Common myeloid progenitor, CD34-positive (primary cell): ENCODE measurements at regions of chr7 and their contacts with region 1.

Region 1: DNA sequence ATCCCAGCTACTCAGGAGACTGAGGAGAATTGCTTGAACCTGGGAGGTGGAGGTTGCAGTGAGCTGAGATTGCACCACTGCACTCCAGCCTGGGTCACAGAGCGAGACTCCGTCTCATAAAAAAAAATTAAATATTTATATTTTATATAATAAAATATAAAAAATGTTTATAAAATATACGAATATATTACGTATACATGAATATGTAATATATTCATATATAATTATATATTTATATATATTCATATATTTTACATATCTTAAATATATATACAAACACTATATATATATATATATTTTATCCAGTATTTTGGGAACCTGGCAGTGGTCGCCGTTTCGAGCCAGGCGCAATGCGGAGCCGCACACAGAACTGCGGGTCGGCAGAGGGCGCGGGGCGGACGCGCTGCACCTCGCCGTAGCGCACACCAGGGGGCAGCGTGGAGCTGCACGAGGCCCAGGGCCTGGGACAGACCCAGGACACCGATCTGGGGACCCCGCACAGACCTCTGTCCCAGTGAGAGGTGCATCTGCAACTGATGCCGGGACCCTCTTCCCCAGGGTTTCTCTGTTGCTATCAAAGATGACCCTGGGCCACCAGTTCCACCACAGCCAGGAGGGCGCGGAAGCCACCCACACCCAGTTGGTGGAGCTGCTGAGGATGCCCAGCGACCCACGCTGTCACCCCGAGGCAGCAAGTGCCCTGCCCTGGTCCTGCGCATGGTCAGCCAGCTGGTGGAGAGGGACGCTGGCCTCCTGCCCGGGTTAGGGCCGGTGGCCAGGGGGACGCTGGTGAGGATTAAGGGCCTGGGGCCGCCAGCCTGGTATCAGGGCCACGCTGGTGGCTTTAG is 22.7 kb downstream of the AP5Z1 start:
- DNase-seq: peak; percentile 54 to 74 (median 71)
- H3K4me3 ChIP-seq: no peak overlapping the region
- H3K27ac ChIP-seq: no peak overlapping the region
- H3K4me1 ChIP-seq: peaks cover 0 to under 1% (median under 1%) of the 10 kb centered on the region in 4 experiments
- H3K27me3 ChIP-seq: no peaks in the 10 kb centered on the region

Region 2: GRCh38 chr7:4809091-4809591 is 11.1 kb after region 1 on chr7:
- CTCF ChIA-PET with region 1: interaction called, 17 read pairs
- POLR2A ChIA-PET with region 1: no interaction called
- DNase-seq: peak; percentile 85 to 93 (median 87)
- H3K4me3 ChIP-seq: peak overlapping the region in 5 of 7 experiments; percentile 29 to 69 (median 52)
- H3K27ac ChIP-seq: peak overlapping the region in 1 of 2 experiments; percentile 68
- H3K4me1 ChIP-seq: peaks cover 0 to 40% (median 22%) of the 10 kb centered on the region in 4 experiments
- H3K27me3 ChIP-seq: no peaks in the 10 kb centered on the region

Region 3: GRCh38 chr7:4815609-4816418 is 17.7 kb after region 1 on chr7:
- CTCF ChIA-PET with region 1: interaction called, 17 read pairs
- POLR2A ChIA-PET with region 1: interaction called, 3 read pairs
- DNase-seq: no peak
- H3K4me3 ChIP-seq: no peak overlapping the region
- H3K27ac ChIP-seq: no peak overlapping the region
- H3K4me1 ChIP-seq: peaks cover 0 to 23% (median 12%) of the 10 kb centered on the region in 4 experiments
- H3K27me3 ChIP-seq: no peaks in the 10 kb centered on the region

Region 4: GRCh38 chr7:4823441-4824119 is 25.5 kb after region 1 on chr7:
- CTCF ChIA-PET with region 1: interaction called, 29 read pairs
- POLR2A ChIA-PET with region 1: no interaction called
- DNase-seq: peak; percentile 48 to 90 (median 83)
- H3K4me3 ChIP-seq: no peak overlapping the region
- H3K27ac ChIP-seq: no peak overlapping the region
- H3K4me1 ChIP-seq: peaks cover 0 to 10% (median 3%) of the 10 kb centered on the region in 4 experiments
- H3K27me3 ChIP-seq: no peaks in the 10 kb centered on the region

Region 5: GRCh38 chr7:4883374-4884144 is 85.5 kb after region 1 on chr7 and contains the start of gene RADIL:
- CTCF ChIA-PET with region 1: interaction called, 73 read pairs
- POLR2A ChIA-PET with region 1: no interaction called
- DNase-seq: peak; percentile 93 to 95 (median 95)
- H3K4me3 ChIP-seq: peak within 1 kb of the TSS; percentile 18 to 66 (median 48)
- H3K27ac ChIP-seq: no peak within 1 kb of the TSS
- H3K4me1 ChIP-seq: peaks cover 0 to 17% (median 15%) of the 10 kb centered on the region in 4 experiments
- H3K27me3 ChIP-seq: peaks cover 0 to 28% (median 22%) of the 10 kb centered on the region in 5 experiments

Region 6: GRCh38 chr7:4916115-4916514 is 118.0 kb after region 1 on chr7:
- CTCF ChIA-PET with region 1: no interaction called
- POLR2A ChIA-PET with region 1: no interaction called
- DNase-seq: no peak
- H3K4me3 ChIP-seq: no peak overlapping the region
- H3K27ac ChIP-seq: no peak overlapping the region
- H3K4me1 ChIP-seq: no peaks in the 10 kb centered on the region
- H3K27me3 ChIP-seq: peaks cover 0 to 2% (median 0%) of the 10 kb centered on the region in 5 experiments

Region 7: DNA sequence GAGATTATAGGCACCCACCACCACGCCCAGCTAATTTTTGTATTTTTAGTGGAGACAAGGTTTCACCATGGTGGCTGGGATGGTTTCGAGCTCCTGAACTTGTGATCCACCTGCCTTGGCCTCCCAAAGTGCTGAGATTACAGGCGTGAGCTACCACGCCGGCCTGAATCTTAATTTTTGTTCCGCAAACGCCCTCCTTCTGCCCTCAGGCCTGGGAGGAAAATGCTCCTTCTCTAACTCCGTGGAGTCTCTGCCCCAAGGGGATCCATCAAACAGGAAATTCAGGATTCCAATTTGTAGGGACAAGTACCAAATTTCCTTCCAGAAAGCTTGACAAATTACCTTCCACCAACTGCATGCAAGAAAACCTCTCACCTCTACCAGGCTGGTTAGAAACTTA is 290.8 kb after region 1 on chr7:
- CTCF ChIA-PET with region 1: interaction called, 52 read pairs
- POLR2A ChIA-PET with region 1: interaction called, 3 read pairs
- DNase-seq: no peak
- H3K4me3 ChIP-seq: no peak overlapping the region
- H3K27ac ChIP-seq: no peak overlapping the region
- H3K4me1 ChIP-seq: peaks cover 0 to 3% (median 1%) of the 10 kb centered on the region in 4 experiments
- H3K27me3 ChIP-seq: peaks cover 0 to 14% (median 2%) of the 10 kb centered on the region in 5 experiments